ENCODE measurements at regions of chr1 and their contacts with region 1.

Region 1: GRCh38 chr1:240189386-240189989 is 97.8 kb downstream of the FMN2 start:
- DNase-seq: peak; percentile 9 to 57
- H3K4me3 ChIP-seq: no peak overlapping the region
- H3K27ac ChIP-seq: no peak overlapping the region
- H3K4me1 ChIP-seq: no peaks in the 10 kb centered on the region
- H3K27me3 ChIP-seq: no peaks in the 10 kb centered on the region
- CTCF ChIP-seq: peak in 2 of 3 experiments; percentile 61 to 64; a peak in 2 of 4 replicates
- EP300 ChIP-seq: no peak
- POLR2A ChIP-seq: no peak
- RAD21 ChIP-seq: peak; percentile 66 to 70

Region 2: GRCh38 chr1:239811211-239811885 is 378.1 kb before region 1 on chr1:
- CTCF ChIA-PET with region 1: no interaction called
- POLR2A ChIA-PET with region 1: no interaction called
- DNase-seq: no peak
- H3K4me3 ChIP-seq: no peak overlapping the region
- H3K27ac ChIP-seq: no peak overlapping the region
- H3K4me1 ChIP-seq: peaks cover 0 to 27% (median 22%) of the 10 kb centered on the region in 4 experiments; a peak in 6 of 7 replicates
- H3K27me3 ChIP-seq: no peaks in the 10 kb centered on the region
- CTCF ChIP-seq: no peak
- EP300 ChIP-seq: no peak
- POLR2A ChIP-seq: no peak
- RAD21 ChIP-seq: no peak

Region 3: DNA sequence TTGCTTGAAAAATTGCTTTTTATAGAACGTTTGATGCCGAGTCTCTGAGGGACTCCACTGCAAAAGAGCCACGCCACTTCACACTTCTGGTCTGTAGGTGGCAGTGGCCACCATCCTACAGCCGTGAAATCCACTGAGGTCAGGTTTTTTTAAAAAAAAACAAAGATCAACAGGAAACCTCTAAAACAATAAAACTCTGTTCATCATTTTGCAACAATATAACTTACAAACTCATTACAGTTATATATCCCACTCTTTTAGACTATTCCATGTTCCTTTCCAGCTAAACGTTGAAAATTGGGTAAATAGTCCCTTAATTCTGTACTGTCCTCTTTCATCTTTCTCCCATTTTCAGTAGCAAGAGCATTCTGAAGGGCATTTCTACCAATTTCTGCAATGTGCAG is 162.4 kb before region 1 on chr1:
- CTCF ChIA-PET with region 1: interaction called, 16 read pairs
- POLR2A ChIA-PET with region 1: no interaction called
- DNase-seq: peak in 1 of 2 experiments; percentile 57
- H3K4me3 ChIP-seq: no peak overlapping the region
- H3K27ac ChIP-seq: no peak overlapping the region
- H3K4me1 ChIP-seq: no peaks in the 10 kb centered on the region
- H3K27me3 ChIP-seq: no peaks in the 10 kb centered on the region
- CTCF ChIP-seq: peak; percentile 70 to 85 (median 74)
- EP300 ChIP-seq: no peak
- POLR2A ChIP-seq: no peak
- RAD21 ChIP-seq: peak; percentile 91 to 93

Region 4: DNA sequence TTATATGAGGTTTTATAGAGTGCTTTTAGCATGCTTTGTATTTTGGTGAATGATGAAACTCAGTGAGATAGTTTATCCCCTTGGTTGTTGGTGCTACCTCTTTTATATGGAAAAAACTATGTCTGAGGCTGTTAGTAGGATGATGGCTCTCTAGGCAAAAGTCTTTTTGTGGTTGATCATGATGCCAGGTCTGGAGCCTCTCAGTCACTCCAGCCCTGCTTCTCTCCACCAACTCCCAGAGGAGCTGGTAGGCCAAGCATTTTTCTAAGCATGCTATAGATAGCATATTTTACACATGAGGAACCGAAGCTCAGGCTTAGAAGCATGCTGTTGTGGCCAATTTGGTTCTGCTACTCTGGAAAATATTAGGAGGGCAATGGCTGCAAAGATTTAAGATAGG is 15.7 kb before region 1 on chr1:
- CTCF ChIA-PET with region 1: interaction called, 13 read pairs
- POLR2A ChIA-PET with region 1: no interaction called
- DNase-seq: no peak
- H3K4me3 ChIP-seq: no peak overlapping the region
- H3K27ac ChIP-seq: no peak overlapping the region
- H3K4me1 ChIP-seq: no peaks in the 10 kb centered on the region
- H3K27me3 ChIP-seq: no peaks in the 10 kb centered on the region
- CTCF ChIP-seq: no peak
- EP300 ChIP-seq: no peak
- POLR2A ChIP-seq: no peak
- RAD21 ChIP-seq: no peak

Region 5: GRCh38 chr1:240691521-240692338 is 502.2 kb after region 1 on chr1:
- CTCF ChIA-PET with region 1: interaction called, 14 read pairs
- POLR2A ChIA-PET with region 1: no interaction called
- DNase-seq: peak; percentile 27 to 55
- H3K4me3 ChIP-seq: no peak overlapping the region
- H3K27ac ChIP-seq: no peak overlapping the region
- H3K4me1 ChIP-seq: no peaks in the 10 kb centered on the region
- H3K27me3 ChIP-seq: no peaks in the 10 kb centered on the region
- CTCF ChIP-seq: peak; percentile 51 to 86 (median 84)
- EP300 ChIP-seq: no peak
- POLR2A ChIP-seq: no peak
- RAD21 ChIP-seq: peak; percentile 95 to 97